Aorta (tissue), 5 donors: ENCODE measurements at regions of chr6 and their contacts with region 1.

Region 1: DNA sequence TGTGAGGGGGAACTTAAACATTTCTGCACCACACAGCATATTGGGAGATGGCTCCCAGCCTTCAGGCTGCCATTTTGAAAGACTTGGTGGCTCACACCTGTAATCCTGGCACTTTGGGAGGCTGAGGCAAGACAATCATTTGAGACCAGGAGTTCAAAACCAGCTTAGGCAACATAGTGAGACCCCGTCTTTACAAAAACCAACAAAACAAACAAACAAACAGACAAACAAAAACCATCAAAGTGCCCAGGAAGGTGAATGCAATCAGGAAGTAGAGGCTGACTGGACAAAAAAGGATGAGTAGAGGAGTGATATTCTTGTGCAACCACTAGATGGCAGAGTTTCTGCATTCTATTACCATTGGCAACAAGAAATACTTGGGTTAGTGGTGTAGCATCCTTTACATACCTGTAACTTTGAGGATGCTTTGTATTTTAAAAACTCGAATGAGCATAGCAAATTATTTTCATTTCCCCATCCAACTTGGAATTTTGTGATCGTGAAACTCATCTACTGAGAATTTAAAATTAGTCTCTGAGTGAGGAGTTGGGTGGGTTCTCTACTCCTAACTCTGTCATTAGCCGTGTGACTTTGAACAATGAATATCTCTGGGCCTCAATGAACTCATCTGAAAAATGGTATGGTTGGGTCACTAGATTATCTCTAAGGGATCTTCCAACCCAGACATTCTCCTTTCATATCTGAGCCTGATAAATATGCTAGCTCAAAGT is 84.4 kb downstream of the CRYBG1 start:
- DNase-seq: no peak
- ATAC-seq: peak; percentile 80
- H3K4me3 ChIP-seq: no peak overlapping the region
- H3K27ac ChIP-seq: no peak overlapping the region
- H3K4me1 ChIP-seq: no peaks in the 10 kb centered on the region
- H3K27me3 ChIP-seq: peaks cover 0 to 2% of the 10 kb centered on the region in 2 donors

Region 2: DNA sequence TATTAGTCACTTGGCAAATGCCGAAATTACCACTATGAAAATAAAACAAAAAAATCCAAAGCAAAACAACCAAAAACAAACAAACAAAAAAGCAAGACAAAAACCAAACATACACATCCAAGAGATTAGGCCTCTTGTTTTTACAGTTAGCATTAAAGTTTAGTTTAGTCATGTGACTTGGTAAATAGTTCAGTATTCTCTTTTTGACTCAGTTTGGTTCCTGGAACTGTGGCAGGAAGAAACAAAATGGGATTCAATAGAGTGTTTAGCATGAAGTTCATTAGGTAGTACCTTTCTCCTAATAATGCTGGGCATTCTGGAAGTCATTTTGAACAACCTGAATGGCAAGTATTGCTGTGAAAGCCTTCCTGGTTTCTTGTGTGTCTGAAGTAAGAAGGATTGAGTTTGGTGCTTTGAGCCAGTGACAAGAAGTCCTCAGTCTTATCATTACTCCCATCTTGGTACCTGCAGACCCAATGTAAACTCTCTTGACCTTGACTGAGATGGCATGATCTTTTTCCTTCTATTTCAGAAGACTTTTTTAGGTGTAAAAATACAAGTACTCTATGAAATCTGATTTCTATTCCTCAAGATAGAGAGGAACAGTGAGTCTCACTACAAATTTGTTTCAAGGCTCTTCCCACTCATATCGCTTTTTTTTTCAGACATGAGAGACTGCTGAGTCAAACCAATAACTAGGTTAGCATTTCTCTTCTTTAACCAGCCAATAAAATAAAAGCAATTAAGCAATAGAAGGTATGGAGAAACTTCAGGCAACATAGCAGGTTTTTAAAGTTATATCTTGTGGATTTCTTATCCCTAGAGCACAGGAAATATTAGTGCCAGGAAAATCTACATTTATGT is 818.4 kb before region 1 on chr6:
- intact Hi-C with region 1: no loop called
- DNase-seq: no peak
- ATAC-seq: no peak
- H3K4me3 ChIP-seq: no peak overlapping the region
- H3K27ac ChIP-seq: no peak overlapping the region
- H3K4me1 ChIP-seq: no peaks in the 10 kb centered on the region
- H3K27me3 ChIP-seq: no peaks in the 10 kb centered on the region

Region 3: GRCh38 chr6:106339334-106340029 is 105.5 kb before region 1 on chr6:
- intact Hi-C with region 1: loop called in 1 of 2 experiments (anchors 10 kb)
- DNase-seq: no peak
- ATAC-seq: peak; percentile 74
- H3K4me3 ChIP-seq: no peak overlapping the region
- H3K27ac ChIP-seq: no peak overlapping the region
- H3K4me1 ChIP-seq: peaks cover 0 to 2% of the 10 kb centered on the region in 2 donors
- H3K27me3 ChIP-seq: peaks cover 0 to 1% of the 10 kb centered on the region in 2 donors

Region 4: DNA sequence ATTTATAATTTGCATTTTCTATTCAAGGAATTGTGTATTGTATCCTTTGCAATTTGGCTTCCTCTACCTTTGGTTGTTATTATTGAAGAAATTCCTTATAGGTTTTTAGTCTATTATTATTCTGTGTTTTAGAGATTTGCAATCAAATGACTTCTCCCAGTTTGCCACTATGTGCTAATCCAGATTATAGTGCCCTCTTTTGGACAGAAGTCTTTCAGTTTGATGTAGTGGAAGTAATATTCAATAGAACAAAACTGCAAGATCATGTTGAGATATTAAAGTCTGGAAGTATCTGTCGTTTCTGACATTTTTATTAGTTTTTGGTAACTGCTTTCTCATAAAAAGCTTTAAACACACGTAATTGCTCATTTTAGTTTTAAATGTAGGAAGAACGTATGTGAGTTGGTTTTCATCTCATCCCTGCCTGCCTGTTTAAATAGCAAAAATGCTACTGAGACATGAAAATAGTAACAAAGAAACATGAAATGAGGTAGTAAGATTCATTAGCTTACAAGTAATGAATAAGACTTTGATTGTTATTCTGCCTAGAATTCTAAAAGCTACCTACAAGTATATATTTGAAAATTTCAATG is 111.5 kb after region 1 on chr6:
- intact Hi-C with region 1: loop called in 1 of 2 experiments (anchors 2 kb)
- DNase-seq: no peak
- ATAC-seq: no peak
- H3K4me3 ChIP-seq: no peak overlapping the region
- H3K27ac ChIP-seq: no peak overlapping the region
- H3K4me1 ChIP-seq: no peaks in the 10 kb centered on the region
- H3K27me3 ChIP-seq: peaks cover 0 to 1% of the 10 kb centered on the region in 2 donors

Region 5: GRCh38 chr6:106568530-106568929 is 123.6 kb after region 1 on chr6:
- intact Hi-C with region 1: loop called in 1 of 2 experiments (anchors 5 kb)
- DNase-seq: no peak
- ATAC-seq: no peak
- H3K4me3 ChIP-seq: no peak overlapping the region
- H3K27ac ChIP-seq: no peak overlapping the region
- H3K4me1 ChIP-seq: no peaks in the 10 kb centered on the region
- H3K27me3 ChIP-seq: no peaks in the 10 kb centered on the region

Region 6: GRCh38 chr6:106979427-106979884 is 534.5 kb after region 1 on chr6:
- intact Hi-C with region 1: loop called (anchors 5 kb)
- DNase-seq: peak; percentile 85 to 94
- ATAC-seq: peak; percentile 89
- H3K4me3 ChIP-seq: no peak overlapping the region
- H3K27ac ChIP-seq: no peak overlapping the region
- H3K4me1 ChIP-seq: no peaks in the 10 kb centered on the region
- H3K27me3 ChIP-seq: no peaks in the 10 kb centered on the region